Astrocyte of the cerebellum (primary cell): ENCODE measurements at regions of chrX and their contacts with region 1.

Region 1: DNA sequence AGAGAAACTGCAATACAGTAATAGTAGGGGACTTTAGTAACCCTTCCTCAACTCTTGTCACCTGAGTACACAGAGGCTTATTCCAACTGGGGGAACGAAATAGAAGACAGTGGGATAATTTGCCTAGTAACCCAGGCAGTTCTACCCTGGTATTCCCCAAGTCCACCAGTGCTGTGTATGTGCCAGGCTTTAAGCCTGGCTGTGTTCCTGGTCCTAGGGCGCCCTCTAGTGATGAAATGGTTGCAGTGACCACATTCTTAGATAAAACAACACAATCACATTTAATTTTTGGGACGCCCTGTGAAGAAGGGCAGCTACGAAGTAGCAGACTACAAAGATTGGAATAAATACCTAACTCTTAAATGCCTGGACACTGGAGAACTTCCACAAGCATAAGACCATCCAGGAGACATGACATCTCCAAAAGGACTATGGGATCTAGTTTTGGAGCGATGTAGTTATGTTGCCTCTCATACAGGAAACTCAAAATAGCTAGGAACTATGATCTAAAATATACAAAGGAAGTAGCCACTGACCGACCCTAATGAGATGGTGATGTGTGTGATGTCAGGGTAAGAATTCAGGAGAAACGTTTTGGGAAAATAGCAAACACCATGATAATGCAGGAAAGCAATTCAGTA is 288.5 kb upstream of the ZCCHC13 start:
- DNase-seq: peak; percentile 70
- H3K4me3 ChIP-seq: no peak overlapping the region
- CTCF ChIP-seq: peak; percentile 82

Region 2: GRCh38 chrX:73855546-73855945 is 160.0 kb before region 1 on chrX:
- in situ Hi-C with region 1: loop called (anchors 25 kb)
- DNase-seq: peak; percentile 65
- H3K4me3 ChIP-seq: no peak overlapping the region
- CTCF ChIP-seq: peak; percentile 87

Region 3: DNA sequence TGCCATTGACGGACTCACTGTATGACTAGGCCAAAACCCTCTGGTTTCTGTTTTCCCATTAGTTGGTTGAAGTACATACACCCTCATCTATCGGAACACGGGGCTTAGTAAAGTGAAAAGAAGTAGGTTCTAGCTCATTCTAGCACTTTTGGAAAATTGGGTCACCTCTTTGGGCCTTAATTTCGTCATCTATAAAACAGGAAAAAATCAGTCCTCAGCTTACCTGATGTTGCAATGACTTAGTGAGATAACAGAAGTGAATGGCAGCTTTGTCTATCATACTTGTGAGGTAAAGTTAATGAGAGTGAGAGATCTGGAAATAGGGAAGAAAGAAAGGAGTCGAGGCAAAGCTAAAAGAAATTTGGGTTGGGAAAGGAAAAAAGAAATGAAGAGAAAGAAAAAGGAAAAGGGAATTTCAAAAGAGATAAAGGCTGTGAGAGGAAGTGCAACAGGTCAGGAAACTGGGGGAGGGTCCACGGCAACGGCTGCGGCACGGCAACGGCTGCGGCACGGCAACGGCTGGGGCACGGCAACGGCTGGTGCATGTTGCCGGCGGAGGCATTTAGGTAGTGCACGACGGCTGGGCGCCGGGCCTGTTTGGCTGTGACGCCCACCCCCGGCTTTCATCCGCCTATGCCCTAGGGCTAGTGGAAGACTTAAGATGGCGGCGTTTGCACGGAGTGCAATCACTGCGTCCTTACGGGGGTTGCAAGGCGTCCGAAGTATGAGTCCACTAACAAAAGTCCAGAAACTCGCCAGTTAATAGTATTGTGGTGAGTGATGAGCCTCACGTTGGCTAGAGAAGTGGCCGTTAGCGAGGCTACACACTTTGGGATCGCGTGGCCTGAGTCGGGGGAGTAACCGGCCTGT is 71.6 kb before region 1 on chrX:
- in situ Hi-C with region 1: no loop called
- DNase-seq: peak; percentile 83
- H3K4me3 ChIP-seq: peak overlapping the region; percentile 82
- CTCF ChIP-seq: no peak

Region 4: DNA sequence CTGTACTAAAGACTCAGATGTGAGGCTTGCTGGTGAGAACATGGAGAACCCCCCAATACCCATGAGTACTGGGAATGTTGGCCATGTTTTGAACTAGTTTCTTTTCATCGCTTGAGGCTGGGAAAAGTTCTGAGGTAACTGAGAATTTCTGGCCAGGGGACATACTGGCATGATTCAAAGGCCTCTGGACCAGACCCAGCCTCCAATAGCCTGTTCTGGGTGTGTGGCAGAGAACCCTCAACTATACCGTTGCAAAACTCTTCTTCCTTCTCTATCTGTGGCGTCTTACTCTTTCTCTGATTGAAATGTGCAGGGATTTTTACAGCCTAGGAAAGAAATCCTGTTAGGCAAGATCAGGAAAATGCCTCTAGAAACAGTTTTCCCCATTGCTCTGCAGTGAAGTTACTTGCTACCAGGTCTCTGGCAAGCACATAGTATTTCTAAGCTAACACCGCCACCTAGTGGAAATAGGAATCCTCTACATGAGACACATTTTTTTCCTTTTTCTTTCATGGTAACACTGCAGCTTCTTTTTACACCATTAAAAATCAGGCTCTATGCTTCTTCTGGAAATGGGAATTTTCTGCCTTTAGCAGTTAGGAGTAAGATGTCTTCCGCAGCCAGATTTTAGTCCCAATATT is 117.8 kb after region 1 on chrX:
- in situ Hi-C with region 1: loop called (anchors 5 kb)
- DNase-seq: peak; percentile 63
- H3K4me3 ChIP-seq: no peak overlapping the region
- CTCF ChIP-seq: peak; percentile 64